ENCODE measurements at regions of chr11 and their contacts with region 1.

Region 1: DNA sequence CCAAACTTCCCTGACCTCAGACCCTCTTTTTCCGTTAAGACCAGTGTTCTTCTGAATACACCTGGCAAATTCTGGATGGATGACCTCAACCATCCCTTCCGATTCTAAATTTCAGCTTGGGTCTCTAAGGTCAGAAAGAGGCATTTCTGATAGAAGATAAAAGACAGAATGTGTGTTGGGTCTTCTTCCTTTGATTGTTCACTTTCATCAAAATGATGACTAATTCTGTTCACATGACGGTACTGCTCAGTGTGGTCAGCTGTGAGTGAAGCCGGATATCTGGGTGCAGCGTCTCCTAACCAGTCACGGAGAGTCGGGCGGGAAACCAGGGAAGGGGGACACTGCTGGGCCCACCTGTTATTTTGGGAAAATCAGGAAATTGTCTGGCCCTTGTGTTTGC is 151.6 kb upstream of the NAV2 start:
- DNase-seq: peak; percentile 81
- H3K4me3 ChIP-seq: no peak overlapping the region
- H3K27ac ChIP-seq: peak overlapping the region; percentile 61
- H3K4me1 ChIP-seq: peaks cover 23% of the 10 kb centered on the region
- H3K27me3 ChIP-seq: no peaks in the 10 kb centered on the region
- CTCF ChIP-seq: no peak
- POLR2A ChIP-seq: no peak

Region 2: GRCh38 chr11:19508159-19508558 is 52.9 kb before region 1 on chr11:
- CTCF ChIA-PET with region 1: no interaction called
- POLR2A ChIA-PET with region 1: no interaction called
- dilution Hi-C with region 1: no loop called
- intact Hi-C with region 1: no loop called
- DNase-seq: peak; percentile 48
- H3K4me3 ChIP-seq: no peak overlapping the region
- H3K27ac ChIP-seq: no peak overlapping the region
- H3K4me1 ChIP-seq: peaks cover 24% of the 10 kb centered on the region
- H3K27me3 ChIP-seq: no peaks in the 10 kb centered on the region
- CTCF ChIP-seq: no peak
- POLR2A ChIP-seq: no peak

Region 3: DNA sequence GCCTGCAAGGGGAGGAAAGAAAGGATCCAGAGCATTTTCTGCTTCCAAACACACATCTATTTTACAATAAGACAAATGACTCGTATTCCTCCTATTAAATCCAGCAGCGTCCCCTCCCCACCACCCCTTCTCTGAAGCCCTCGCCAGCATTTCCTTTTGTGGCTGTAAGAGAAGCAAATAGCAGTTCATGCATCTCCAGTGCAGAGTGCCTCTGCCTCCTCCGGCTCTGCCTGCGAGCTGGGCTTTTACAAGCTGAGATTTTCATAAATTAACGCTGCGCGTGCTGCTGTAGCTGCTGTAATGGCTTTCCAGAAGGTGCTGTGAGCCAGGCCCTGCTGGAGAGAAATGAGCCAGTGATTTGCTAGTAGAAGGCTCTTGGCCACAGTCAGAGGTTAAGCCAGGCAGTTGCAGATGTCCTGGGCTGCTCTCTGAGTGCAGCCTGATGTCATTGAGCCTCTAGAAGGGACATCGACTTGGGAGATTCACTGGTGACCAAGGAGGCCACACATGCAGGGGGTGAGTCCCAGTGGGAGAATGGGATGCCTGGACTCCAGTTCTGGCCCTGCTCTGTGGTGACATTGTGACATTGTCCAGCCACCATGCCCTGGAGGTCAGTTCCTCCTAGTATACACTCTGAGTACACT is 17.1 kb after region 1 on chr11:
- CTCF ChIA-PET with region 1: interaction called, 27 read pairs
- POLR2A ChIA-PET with region 1: no interaction called
- dilution Hi-C with region 1: no loop called
- intact Hi-C with region 1: loop called (anchors 1 kb)
- DNase-seq: peak; percentile 86
- H3K4me3 ChIP-seq: peak overlapping the region in 1 of 3 experiments; percentile 25
- H3K27ac ChIP-seq: peak overlapping the region; percentile 78
- H3K4me1 ChIP-seq: peaks cover 25% of the 10 kb centered on the region
- H3K27me3 ChIP-seq: no peaks in the 10 kb centered on the region
- CTCF ChIP-seq: no peak
- POLR2A ChIP-seq: no peak

Region 4: DNA sequence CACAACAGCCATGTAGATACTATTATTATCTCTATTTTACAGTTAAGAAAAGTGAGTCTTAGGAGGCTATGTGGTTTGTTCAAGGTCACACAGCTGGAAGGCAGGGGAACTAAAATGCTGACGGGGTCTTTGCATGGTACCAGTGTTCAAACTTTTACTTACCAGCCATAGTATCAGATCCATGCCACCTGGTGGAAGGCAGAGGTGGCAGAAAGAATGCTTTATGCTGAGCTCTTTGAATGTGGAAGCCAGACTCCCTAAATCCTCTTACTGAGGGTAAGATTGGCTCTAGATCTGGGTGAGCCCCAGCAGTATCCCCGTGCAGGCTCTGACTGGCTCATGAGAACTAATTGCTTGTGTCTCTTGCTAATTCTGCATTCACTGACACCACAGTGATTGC is 97.3 kb after region 1 on chr11:
- CTCF ChIA-PET with region 1: interaction called, 39 read pairs
- POLR2A ChIA-PET with region 1: no interaction called
- dilution Hi-C with region 1: no loop called
- intact Hi-C with region 1: loop called (anchors 1 kb)
- DNase-seq: no peak
- H3K4me3 ChIP-seq: no peak overlapping the region
- H3K27ac ChIP-seq: no peak overlapping the region
- H3K4me1 ChIP-seq: peaks cover 9% of the 10 kb centered on the region
- H3K27me3 ChIP-seq: no peaks in the 10 kb centered on the region
- CTCF ChIP-seq: peak; percentile 10 to 35
- POLR2A ChIP-seq: no peak

Region 5: DNA sequence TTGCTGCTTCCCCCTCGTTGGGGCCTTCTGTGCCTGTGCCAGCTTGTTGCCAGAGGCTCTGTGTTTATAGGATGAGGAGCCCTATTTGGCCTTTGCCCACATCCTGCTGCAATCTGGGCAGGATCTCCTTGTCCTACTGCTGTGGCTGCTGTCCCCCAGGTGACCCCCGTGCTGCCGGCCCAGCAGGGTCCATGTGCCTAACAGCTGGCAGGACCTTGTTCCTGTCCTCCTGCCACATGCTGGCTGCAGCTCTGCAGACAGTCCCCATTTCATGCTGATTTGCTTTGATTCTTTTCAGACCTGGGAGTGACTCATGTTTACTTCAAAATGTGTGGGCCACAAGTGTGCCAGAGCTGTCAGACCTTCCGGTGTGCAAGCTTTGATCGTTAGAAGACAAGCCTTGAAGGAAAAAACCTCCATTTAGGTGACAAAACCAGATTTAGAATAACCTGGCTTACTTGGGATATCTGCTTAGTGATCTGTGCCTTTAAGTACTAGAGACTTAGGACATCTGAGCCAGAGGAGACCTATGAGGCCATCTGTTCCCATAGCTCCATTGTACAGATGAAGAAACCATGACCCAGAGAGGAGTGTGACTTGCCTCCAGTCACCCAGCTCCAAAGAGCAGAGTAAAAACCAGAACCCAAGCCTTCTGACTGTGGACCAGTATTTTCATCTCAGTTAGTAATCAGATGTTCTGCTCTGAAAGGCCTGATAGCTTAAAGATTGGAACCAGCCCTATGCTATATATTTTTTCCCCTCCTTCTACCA is 162.7 kb after region 1 on chr11:
- CTCF ChIA-PET with region 1: interaction called, 30 read pairs
- POLR2A ChIA-PET with region 1: no interaction called
- dilution Hi-C with region 1: loop called (anchors 10 kb)
- intact Hi-C with region 1: no loop called
- DNase-seq: peak; percentile 72
- H3K4me3 ChIP-seq: no peak overlapping the region
- H3K27ac ChIP-seq: peak overlapping the region; percentile 65
- H3K4me1 ChIP-seq: peaks cover 25% of the 10 kb centered on the region
- H3K27me3 ChIP-seq: no peaks in the 10 kb centered on the region
- CTCF ChIP-seq: no peak
- POLR2A ChIP-seq: no peak

Region 6: GRCh38 chr11:19742588-19743292 is 181.7 kb after region 1 on chr11:
- CTCF ChIA-PET with region 1: interaction called, 235 read pairs
- POLR2A ChIA-PET with region 1: no interaction called
- dilution Hi-C with region 1: no loop called
- intact Hi-C with region 1: loop called (anchors 1 kb)
- DNase-seq: peak; percentile 82
- H3K4me3 ChIP-seq: no peak overlapping the region
- H3K27ac ChIP-seq: no peak overlapping the region
- H3K4me1 ChIP-seq: peaks cover 8% of the 10 kb centered on the region
- H3K27me3 ChIP-seq: no peaks in the 10 kb centered on the region
- CTCF ChIP-seq: peak; percentile 75 to 76
- POLR2A ChIP-seq: no peak

Region 7: DNA sequence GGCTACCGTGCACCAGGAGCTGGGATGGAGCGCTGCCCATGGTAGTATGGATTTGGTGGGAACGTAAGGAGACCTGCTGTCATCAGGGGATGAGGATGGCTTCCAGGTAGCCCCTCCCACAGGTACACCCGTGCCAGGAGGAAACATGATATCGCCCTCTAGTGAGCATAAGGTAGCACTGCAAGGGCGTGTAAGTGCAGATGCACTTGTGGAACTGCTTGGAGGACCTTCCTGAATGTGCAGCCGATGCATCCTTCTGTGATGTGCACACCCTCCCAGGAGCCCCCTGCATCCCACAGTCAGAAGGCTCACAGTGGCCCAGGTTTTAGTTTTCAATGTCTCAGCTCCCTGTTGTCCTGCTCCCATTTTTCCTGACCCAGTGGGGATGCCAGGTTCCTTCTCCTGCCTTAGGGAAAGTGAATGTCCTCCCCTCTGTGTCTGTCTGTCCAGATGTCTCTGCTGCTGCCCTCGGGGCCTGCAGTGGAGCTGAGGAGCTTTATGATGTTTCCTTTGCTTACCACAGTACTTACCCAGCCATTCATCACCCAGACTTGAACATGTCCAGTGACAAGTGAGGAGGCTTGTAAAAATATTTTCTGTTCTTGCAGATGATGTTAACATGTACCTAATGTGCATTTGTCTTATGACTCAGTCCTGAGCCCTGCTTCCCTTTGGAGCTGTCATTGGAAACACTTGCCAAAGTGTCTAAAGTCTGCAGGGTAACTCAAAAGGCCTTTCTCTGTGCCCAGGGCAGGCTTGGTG is 550.1 kb after region 1 on chr11:
- CTCF ChIA-PET with region 1: no interaction called
- POLR2A ChIA-PET with region 1: no interaction called
- dilution Hi-C with region 1: no loop called
- intact Hi-C with region 1: loop called (anchors 1 kb)
- DNase-seq: peak; percentile 61
- H3K4me3 ChIP-seq: no peak overlapping the region
- H3K27ac ChIP-seq: peak overlapping the region; percentile 88
- H3K4me1 ChIP-seq: peaks cover 38% of the 10 kb centered on the region
- H3K27me3 ChIP-seq: no peaks in the 10 kb centered on the region
- CTCF ChIP-seq: peak; percentile 83 to 89
- POLR2A ChIP-seq: no peak

Measured in endothelial cell of umbilical vein (primary cell).